ENCODE measurements at regions of chr5 and their contacts with region 1.

Region 1: DNA sequence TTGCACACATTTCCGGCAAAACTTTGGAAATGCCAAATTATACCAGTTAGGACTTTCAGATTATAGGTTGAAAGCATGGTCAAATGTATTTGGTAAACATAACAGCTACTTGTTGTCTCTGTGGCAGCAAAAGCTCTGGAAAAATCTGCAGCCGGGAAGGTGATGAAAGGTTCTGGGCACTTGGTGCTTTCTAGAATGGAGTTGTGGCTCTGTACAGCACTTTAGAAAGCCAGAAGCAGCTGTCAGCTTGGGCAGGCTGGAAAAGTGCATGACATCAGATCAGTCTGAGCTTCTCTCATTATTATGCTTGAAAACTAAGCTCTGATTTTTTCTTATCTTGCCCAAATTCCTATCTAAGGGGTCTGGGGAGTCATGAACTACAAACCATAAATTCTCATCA is 118.6 kb upstream of the MAST4 start:
- DNase-seq: no peak
- H3K4me3 ChIP-seq: no peak overlapping the region
- H3K27ac ChIP-seq: no peak overlapping the region
- H3K27me3 ChIP-seq: no peaks in the 10 kb centered on the region
- CTCF ChIP-seq: no peak

Region 2: GRCh38 chr5:66426259-66427138 is 51.1 kb before region 1 on chr5:
- CTCF ChIA-PET with region 1: no interaction called
- POLR2A ChIA-PET with region 1: interaction called, 13 read pairs
- DNase-seq: no peak
- H3K4me3 ChIP-seq: no peak overlapping the region
- H3K27ac ChIP-seq: no peak overlapping the region
- H3K27me3 ChIP-seq: peaks cover 4% of the 10 kb centered on the region
- CTCF ChIP-seq: no peak

Region 3: DNA sequence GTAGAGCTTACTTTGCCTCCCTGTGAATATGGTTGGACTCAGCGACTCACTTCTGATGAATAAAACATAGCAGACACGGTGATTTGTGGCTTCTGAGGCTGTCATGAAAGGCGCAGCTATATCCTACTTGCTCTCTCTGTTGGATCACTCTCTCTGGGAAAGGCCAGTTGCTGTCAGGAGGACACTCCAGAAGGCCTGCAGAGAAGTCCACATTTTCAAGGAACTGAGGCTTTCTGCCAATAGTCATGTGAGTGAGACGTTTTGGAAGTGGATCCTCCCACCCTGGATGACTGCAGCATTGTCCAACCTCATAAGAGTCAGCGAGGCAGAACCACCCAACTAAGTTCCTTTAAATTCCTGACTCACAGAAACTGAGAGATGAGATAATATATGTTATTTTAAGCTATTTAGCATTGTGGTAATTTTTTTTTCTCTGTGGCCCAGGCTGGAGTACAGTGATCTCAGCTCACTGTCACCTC is 37.4 kb before region 1 on chr5:
- CTCF ChIA-PET with region 1: no interaction called
- POLR2A ChIA-PET with region 1: no interaction called
- DNase-seq: no peak
- H3K4me3 ChIP-seq: no peak overlapping the region
- H3K27ac ChIP-seq: no peak overlapping the region
- H3K27me3 ChIP-seq: no peaks in the 10 kb centered on the region
- CTCF ChIP-seq: no peak

Measured in AG04450 (cell line).